ENCODE measurements at regions of chr1 and their contacts with region 1.

Region 1: GRCh38 chr1:175319418-175320230 is 127.0 kb upstream of the KIAA0040 start:
- DNase-seq: peak; percentile 76 to 85 (median 83)
- ATAC-seq: peak; percentile 70 to 86 (median 86)
- H3K4me3 ChIP-seq: no peak overlapping the region
- H3K27ac ChIP-seq: peak overlapping the region in 9 of 12 donors; percentile 10 to 83 (median 71)
- H3K4me1 ChIP-seq: peaks cover 0 to 30% (median 19%) of the 10 kb centered on the region in 12 donors
- H3K27me3 ChIP-seq: no peaks in the 10 kb centered on the region
- CTCF ChIP-seq: peak; percentile 81 to 93 (median 90)
- POLR2A ChIP-seq: no peak

Region 2: GRCh38 chr1:175023043-175023921 is 296.3 kb before region 1 on chr1 and contains the start of gene MRPS14:
- intact Hi-C with region 1: loop called in 1 of 10 experiments (anchors 10 kb)
- DNase-seq: peak; percentile 97 to 98 (median 98)
- ATAC-seq: peak; percentile 97 to 100 (median 99)
- H3K4me3 ChIP-seq: peak within 1 kb of the TSS; percentile 70 to 96 (median 92)
- H3K27ac ChIP-seq: peak within 1 kb of the TSS; percentile 54 to 90 (median 81)
- H3K4me1 ChIP-seq: peaks cover 0 to 27% (median 16%) of the 10 kb centered on the region in 12 donors
- H3K27me3 ChIP-seq: no peaks in the 10 kb centered on the region
- CTCF ChIP-seq: no peak
- POLR2A ChIP-seq: peak in 1 of 2 donors; percentile 70
- total RNA-seq, gene MRPS14: 15.5 to 27.0 (median 22.7) TPM

Region 3: GRCh38 chr1:175035865-175036264 is 283.8 kb before region 1 on chr1:
- intact Hi-C with region 1: loop called in 9 of 10 experiments (anchors 2 to 10 kb)
- DNase-seq: no peak
- ATAC-seq: no peak
- H3K4me3 ChIP-seq: no peak overlapping the region
- H3K27ac ChIP-seq: no peak overlapping the region
- H3K4me1 ChIP-seq: no peaks in the 10 kb centered on the region
- H3K27me3 ChIP-seq: no peaks in the 10 kb centered on the region
- CTCF ChIP-seq: no peak
- POLR2A ChIP-seq: no peak

Region 4: DNA sequence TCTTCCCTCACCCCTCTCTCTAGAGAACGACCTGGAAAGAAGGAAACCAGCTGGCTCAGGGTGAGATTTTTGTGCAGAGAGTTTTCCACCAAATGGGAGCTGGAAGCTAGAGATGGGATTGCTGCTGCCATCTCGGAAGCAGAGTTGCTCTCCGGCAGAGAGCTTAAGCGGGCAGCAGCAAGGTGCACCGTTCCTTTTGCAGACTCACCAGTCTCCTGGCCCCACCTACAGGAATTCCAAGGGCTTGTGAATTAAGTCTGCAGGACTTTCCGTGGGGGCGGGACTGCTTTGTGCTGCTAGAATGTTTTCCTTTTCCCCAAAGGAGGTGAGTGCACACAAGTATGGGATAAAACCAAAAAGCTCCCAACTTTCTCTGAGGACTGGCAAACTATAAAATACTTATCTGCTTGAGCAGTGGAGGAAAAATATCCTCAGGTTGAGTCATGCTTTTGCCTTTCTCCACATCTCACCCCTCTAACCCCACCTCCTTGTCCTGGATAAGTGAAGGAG is 97.9 kb before region 1 on chr1:
- intact Hi-C with region 1: loop called in 3 of 10 experiments (anchors 2 to 10 kb)
- DNase-seq: peak in 4 of 5 donors; percentile 48 to 56 (median 51)
- ATAC-seq: peak in 3 of 4 donors; percentile 57 to 71 (median 70)
- H3K4me3 ChIP-seq: no peak overlapping the region
- H3K27ac ChIP-seq: peak overlapping the region in 9 of 12 donors; percentile 8 to 65 (median 31)
- H3K4me1 ChIP-seq: peaks cover 0 to 39% (median 17%) of the 10 kb centered on the region in 12 donors
- H3K27me3 ChIP-seq: no peaks in the 10 kb centered on the region
- CTCF ChIP-seq: peak in 10 of 12 donors; percentile 16 to 48 (median 34)
- POLR2A ChIP-seq: no peak

Region 5: DNA sequence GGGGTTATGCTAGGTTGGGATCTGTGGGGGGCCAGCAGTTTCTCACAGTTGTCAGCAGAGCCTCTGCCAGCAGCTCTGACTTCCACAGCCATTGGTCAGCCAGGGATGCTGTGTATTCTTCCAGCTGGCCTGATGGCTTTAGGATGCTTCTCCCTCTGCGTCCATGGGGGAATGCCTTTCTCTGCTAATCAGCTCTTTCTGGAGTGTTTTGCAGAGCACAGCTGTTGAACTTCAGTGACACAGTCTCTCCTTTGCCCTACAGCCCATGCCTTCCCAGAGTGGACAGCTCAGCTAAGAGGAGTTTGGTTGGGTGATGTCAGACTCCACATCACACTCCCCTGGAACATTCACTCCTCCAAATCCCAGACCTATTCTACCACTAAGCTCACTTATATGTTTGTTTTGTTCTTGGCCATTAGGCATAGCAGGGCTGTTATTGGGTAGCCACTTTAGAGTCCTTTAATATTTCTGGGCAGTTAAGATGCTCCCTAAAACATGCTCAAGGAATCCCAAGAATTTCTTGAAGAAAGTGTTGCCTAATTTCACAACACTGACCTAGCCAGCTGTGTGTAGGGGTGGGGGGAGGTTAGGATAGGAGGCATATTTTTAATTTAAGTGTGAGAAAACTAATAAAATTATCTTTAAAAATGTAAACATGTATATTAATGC is 51.8 kb before region 1 on chr1:
- intact Hi-C with region 1: loop called in 2 of 10 experiments (anchors 5 to 10 kb)
- DNase-seq: peak; percentile 64 to 85 (median 76)
- ATAC-seq: peak; percentile 86 to 93 (median 90)
- H3K4me3 ChIP-seq: no peak overlapping the region
- H3K27ac ChIP-seq: peak overlapping the region; percentile 28 to 74 (median 64)
- H3K4me1 ChIP-seq: peaks cover 0 to 25% (median 5%) of the 10 kb centered on the region in 12 donors
- H3K27me3 ChIP-seq: peaks cover 0 to 4% (median 0%) of the 10 kb centered on the region in 9 donors
- CTCF ChIP-seq: no peak
- POLR2A ChIP-seq: no peak

Region 6: DNA sequence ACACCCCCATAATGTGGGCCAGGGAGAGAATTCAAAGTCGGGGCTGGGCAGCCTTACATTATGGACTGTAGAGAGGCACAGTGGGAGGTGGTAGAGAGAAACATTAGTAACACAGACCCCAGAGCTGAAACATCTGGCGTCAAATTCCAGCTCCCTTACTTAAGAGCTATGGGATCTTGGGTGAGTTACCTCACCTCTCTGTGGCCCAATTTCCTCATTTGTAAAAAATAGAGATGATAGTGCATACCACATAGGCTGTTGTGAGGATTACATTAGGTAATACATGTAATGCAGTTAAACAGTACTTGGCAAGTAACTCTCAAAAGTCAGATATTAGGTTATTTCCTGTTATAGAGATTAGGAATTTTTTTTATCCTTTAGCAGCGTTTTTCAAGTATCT is 33.4 kb after region 1 on chr1:
- intact Hi-C with region 1: no loop called
- DNase-seq: no peak
- ATAC-seq: peak in 1 of 4 donors; percentile 36
- H3K4me3 ChIP-seq: no peak overlapping the region
- H3K27ac ChIP-seq: no peak overlapping the region
- H3K4me1 ChIP-seq: no peaks in the 10 kb centered on the region
- H3K27me3 ChIP-seq: peaks cover 0 to 4% (median 0%) of the 10 kb centered on the region in 9 donors
- CTCF ChIP-seq: no peak
- POLR2A ChIP-seq: no peak

Region 7: GRCh38 chr1:175373786-175374623 is 54.4 kb after region 1 on chr1:
- intact Hi-C with region 1: no loop called
- DNase-seq: no peak
- ATAC-seq: peak in 3 of 4 donors; percentile 62 to 77 (median 73)
- H3K4me3 ChIP-seq: no peak overlapping the region
- H3K27ac ChIP-seq: no peak overlapping the region
- H3K4me1 ChIP-seq: no peaks in the 10 kb centered on the region
- H3K27me3 ChIP-seq: peaks cover 0 to 15% (median 0%) of the 10 kb centered on the region in 9 donors
- CTCF ChIP-seq: peak; percentile 43 to 73 (median 61)
- POLR2A ChIP-seq: no peak

Region 8: GRCh38 chr1:175498002-175498401 is 178.4 kb after region 1 on chr1:
- intact Hi-C with region 1: no loop called
- DNase-seq: no peak
- ATAC-seq: no peak
- H3K4me3 ChIP-seq: no peak overlapping the region
- H3K27ac ChIP-seq: no peak overlapping the region
- H3K4me1 ChIP-seq: no peaks in the 10 kb centered on the region
- H3K27me3 ChIP-seq: peaks cover 0 to 31% (median 4%) of the 10 kb centered on the region in 9 donors
- CTCF ChIP-seq: no peak
- POLR2A ChIP-seq: no peak

Region 9: DNA sequence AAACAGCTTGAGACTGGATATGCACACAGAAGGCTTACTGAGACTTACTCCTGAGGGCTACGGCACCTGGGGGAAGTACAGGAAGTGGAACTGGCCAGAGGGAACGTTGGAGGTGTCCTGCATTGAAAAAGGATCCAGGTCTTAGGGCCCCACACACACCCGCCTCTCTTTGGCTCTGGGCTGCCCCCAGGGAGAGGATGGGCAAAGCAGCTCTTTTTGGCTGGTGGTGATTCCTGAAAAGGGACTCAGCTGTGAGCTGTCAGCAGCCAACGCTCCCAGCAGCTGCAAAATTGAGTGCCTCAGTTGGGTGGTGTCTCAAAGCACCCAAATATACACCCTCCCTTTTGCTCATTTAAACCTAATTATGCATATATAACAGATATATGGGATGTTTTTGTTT is 210.6 kb after region 1 on chr1:
- intact Hi-C with region 1: no loop called
- DNase-seq: peak in 1 of 5 donors; percentile 32
- ATAC-seq: no peak
- H3K4me3 ChIP-seq: no peak overlapping the region
- H3K27ac ChIP-seq: no peak overlapping the region
- H3K4me1 ChIP-seq: no peaks in the 10 kb centered on the region
- H3K27me3 ChIP-seq: peaks cover 0 to 5% (median 0%) of the 10 kb centered on the region in 9 donors
- CTCF ChIP-seq: no peak
- POLR2A ChIP-seq: no peak

Region 10: GRCh38 chr1:176073524-176074157 is 754.0 kb after region 1 on chr1:
- intact Hi-C with region 1: loop called in 1 of 10 experiments (anchors 10 kb)
- DNase-seq: peak in 2 of 5 donors; percentile 32 to 41
- ATAC-seq: peak in 3 of 4 donors; percentile 67 to 78 (median 71)
- H3K4me3 ChIP-seq: no peak overlapping the region
- H3K27ac ChIP-seq: no peak overlapping the region
- H3K4me1 ChIP-seq: peaks cover 0 to 7% (median 0%) of the 10 kb centered on the region in 12 donors
- H3K27me3 ChIP-seq: no peaks in the 10 kb centered on the region
- CTCF ChIP-seq: peak; percentile 59 to 85 (median 71)
- POLR2A ChIP-seq: no peak

Measured in heart left ventricle (tissue), 16 donors.